B cell (primary cell): ENCODE measurements at regions of chr3 and their contacts with region 1.

Region 1: DNA sequence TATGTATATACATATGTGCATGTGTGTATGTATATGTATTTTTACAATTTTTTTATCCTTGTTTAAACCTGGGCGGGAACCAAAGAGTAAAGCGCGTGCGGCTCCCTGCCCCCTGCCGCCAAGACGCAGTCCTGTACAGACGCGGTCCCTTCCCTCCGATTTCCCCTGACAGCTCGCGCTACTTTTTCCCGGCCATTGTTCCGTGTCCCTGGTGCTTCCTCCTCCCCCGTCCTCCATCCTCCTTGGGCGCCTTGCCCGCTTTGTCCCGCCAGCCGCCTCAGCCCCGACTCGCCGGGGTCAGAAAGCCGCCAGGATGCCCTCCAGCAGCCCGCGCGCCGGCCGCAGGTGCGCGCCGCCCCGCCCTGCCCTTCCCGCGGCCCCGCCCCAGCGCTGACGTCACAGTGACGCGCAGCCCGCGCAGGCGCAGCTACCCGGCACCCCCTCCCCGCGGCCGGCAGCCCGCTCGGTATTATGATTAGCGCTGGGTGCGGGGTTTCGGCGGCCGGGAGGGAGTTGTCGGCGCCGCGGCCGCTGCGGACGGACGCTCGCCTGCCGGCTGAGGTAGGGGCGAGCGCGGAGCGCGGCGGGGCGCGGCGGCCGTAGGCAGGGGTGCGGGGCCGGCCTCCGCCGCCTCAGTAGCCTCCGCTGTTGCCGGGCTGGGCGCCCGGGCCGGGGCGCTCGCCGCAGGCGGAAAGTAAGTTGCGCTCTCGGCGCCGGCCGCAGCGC is at the start of gene SNRK:
- DNase-seq: peak; percentile 94
- ATAC-seq: peak; percentile 87
- H3K4me3 ChIP-seq: peak within 1 kb of the TSS; percentile 60 to 89 (median 79)
- H3K4me3 Mint-ChIP-seq: peak within 1 kb of the TSS; percentile 100
- H3K27ac ChIP-seq: peak within 1 kb of the TSS; percentile 62 to 83
- H3K27ac Mint-ChIP-seq: peak within 1 kb of the TSS; percentile 99
- H3K4me1 ChIP-seq: peaks cover 40 to 43% of the 10 kb centered on the region in 2 donors
- H3K4me1 Mint-ChIP-seq: peaks cover 46% of the 10 kb centered on the region
- H3K27me3 ChIP-seq: no peaks in the 10 kb centered on the region
- H3K27me3 Mint-ChIP-seq: peaks cover 5% of the 10 kb centered on the region
- CTCF ChIP-seq: no peak
- total RNA-seq, gene SNRK: 46.7 and 48.2 TPM in 2 replicates

Region 2: GRCh38 chr3:42957573-42957972 is 328.7 kb before region 1 on chr3:
- CTCF ChIA-PET with region 1: no interaction called
- POLR2A ChIA-PET with region 1: no interaction called
- intact Hi-C with region 1: no loop called
- DNase-seq: no peak
- ATAC-seq: no peak
- H3K4me3 ChIP-seq: no peak overlapping the region
- H3K4me3 Mint-ChIP-seq: no peak overlapping the region
- H3K27ac ChIP-seq: no peak overlapping the region
- H3K27ac Mint-ChIP-seq: no peak overlapping the region
- H3K4me1 ChIP-seq: no peaks in the 10 kb centered on the region
- H3K4me1 Mint-ChIP-seq: no peaks in the 10 kb centered on the region
- H3K27me3 ChIP-seq: no peaks in the 10 kb centered on the region
- H3K27me3 Mint-ChIP-seq: peaks cover 35% of the 10 kb centered on the region
- CTCF ChIP-seq: no peak

Region 3: GRCh38 chr3:43215663-43216275 is 70.5 kb before region 1 on chr3:
- CTCF ChIA-PET with region 1: no interaction called
- POLR2A ChIA-PET with region 1: no interaction called
- intact Hi-C with region 1: no loop called
- DNase-seq: peak; percentile 11
- ATAC-seq: no peak
- H3K4me3 ChIP-seq: no peak overlapping the region
- H3K4me3 Mint-ChIP-seq: no peak overlapping the region
- H3K27ac ChIP-seq: no peak overlapping the region
- H3K27ac Mint-ChIP-seq: no peak overlapping the region
- H3K4me1 ChIP-seq: no peaks in the 10 kb centered on the region
- H3K4me1 Mint-ChIP-seq: no peaks in the 10 kb centered on the region
- H3K27me3 ChIP-seq: no peaks in the 10 kb centered on the region
- H3K27me3 Mint-ChIP-seq: peaks cover 18% of the 10 kb centered on the region
- CTCF ChIP-seq: peak; percentile 9

Region 4: DNA sequence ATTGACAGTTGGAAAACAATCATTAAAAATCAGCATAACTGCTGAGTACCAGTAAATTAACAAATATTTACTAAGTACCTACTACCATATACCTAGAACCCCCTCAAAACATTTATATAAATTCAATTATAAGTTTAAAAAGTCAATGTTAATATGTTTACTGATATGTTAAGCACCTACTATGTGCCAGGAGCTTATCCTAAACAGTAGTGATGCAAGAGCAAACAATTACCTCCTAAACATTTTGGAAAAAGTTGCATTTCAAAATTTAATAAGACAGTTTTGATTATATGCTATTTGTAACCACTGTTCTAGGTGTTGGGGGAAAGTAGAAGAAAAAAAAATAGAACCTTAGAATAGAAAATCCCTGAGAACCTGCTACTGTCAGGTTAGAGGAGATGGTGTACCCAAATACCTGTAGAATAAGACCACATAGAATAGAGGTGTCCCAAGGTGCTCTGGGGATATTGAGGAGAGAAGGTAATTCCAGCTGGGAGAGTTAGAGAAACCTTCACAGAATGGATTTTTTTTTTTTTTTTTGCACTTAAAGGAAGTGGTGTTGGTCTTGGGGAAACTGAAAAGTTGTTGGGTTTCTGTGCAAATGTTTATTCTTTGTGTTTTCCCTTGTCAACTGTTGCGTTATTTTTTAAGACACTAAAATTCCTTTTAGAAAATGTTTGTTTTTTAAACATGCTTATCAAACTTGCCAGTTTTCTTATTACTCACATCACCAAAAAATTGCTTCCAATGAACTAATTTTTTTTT is 16.0 kb after region 1 on chr3:
- CTCF ChIA-PET with region 1: interaction called, 9 read pairs
- POLR2A ChIA-PET with region 1: interaction called, 3 read pairs
- intact Hi-C with region 1: loop called (anchors 2 kb)
- DNase-seq: no peak
- ATAC-seq: no peak
- H3K4me3 ChIP-seq: no peak overlapping the region
- H3K4me3 Mint-ChIP-seq: no peak overlapping the region
- H3K27ac ChIP-seq: peak overlapping the region in 1 of 2 donors; percentile 28
- H3K27ac Mint-ChIP-seq: peak overlapping the region; percentile 26
- H3K4me1 ChIP-seq: peaks cover 20 to 35% of the 10 kb centered on the region in 2 donors
- H3K4me1 Mint-ChIP-seq: peaks cover 45% of the 10 kb centered on the region
- H3K27me3 ChIP-seq: no peaks in the 10 kb centered on the region
- H3K27me3 Mint-ChIP-seq: no peaks in the 10 kb centered on the region
- CTCF ChIP-seq: no peak

Region 5: DNA sequence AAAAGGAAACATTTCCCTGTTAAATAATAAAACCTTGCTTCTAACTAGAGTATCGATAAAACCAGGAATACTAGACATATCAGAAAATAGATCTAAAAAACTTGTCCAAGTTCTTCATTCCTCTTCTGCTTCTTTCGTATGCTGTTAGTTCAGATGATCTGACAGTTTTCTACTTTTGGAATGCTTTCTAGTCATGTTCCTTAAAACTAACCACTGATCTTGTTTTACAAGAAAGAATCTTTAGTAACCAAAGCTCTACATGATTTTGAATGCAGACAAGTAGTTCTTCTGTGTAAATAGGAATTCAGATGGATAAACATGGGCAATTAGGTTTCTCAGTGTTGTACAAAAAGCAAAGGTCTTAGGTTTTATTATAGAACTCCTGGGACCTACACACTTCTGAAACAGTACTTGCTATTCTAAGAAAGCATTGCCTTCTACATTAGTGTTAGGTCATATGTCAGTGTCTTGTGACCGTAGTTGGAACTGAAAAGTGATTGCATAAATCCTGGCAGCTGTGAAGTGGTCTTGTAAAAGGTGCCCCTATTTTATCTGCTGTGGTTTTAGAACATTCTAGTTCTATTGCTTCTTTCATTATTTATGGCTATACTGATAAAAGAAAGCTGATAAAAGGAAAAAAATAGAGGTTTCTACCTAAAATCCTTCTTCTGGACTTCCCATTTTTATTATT is 40.8 kb after region 1 on chr3:
- CTCF ChIA-PET with region 1: no interaction called
- POLR2A ChIA-PET with region 1: no interaction called
- intact Hi-C with region 1: loop called (anchors 5 kb)
- DNase-seq: no peak
- ATAC-seq: no peak
- H3K4me3 ChIP-seq: no peak overlapping the region
- H3K4me3 Mint-ChIP-seq: peak overlapping the region; percentile 18
- H3K27ac ChIP-seq: peak overlapping the region in 1 of 2 donors; percentile 41
- H3K27ac Mint-ChIP-seq: peak overlapping the region; percentile 47
- H3K4me1 ChIP-seq: peaks cover 25 to 32% of the 10 kb centered on the region in 2 donors
- H3K4me1 Mint-ChIP-seq: peaks cover 44% of the 10 kb centered on the region
- H3K27me3 ChIP-seq: no peaks in the 10 kb centered on the region
- H3K27me3 Mint-ChIP-seq: no peaks in the 10 kb centered on the region
- CTCF ChIP-seq: no peak